Heart right ventricle (tissue), 16 donors: ENCODE measurements at regions of chr4 and their contacts with region 1.

Region 1: GRCh38 chr4:69697536-69698242 is 44.6 kb upstream of the UGT2A1 start:
- DNase-seq: no peak
- ATAC-seq: no peak
- H3K4me3 ChIP-seq: no peak overlapping the region
- H3K27ac ChIP-seq: no peak overlapping the region
- H3K4me1 ChIP-seq: no peaks in the 10 kb centered on the region
- H3K27me3 ChIP-seq: no peaks in the 10 kb centered on the region
- CTCF ChIP-seq: no peak

Region 2: GRCh38 chr4:69881173-69881773 is 183.6 kb after region 1 on chr4:
- intact Hi-C with region 1: loop called in 5 of 10 experiments (anchors 5 to 10 kb)
- DNase-seq: peak in 1 of 2 donors; percentile 3
- ATAC-seq: peak in 3 of 8 donors; percentile 49 to 70 (median 59)
- H3K4me3 ChIP-seq: no peak overlapping the region
- H3K27ac ChIP-seq: no peak overlapping the region
- H3K4me1 ChIP-seq: no peaks in the 10 kb centered on the region
- H3K27me3 ChIP-seq: no peaks in the 10 kb centered on the region
- CTCF ChIP-seq: peak in 8 of 9 donors; percentile 14 to 72 (median 58)

Region 3: DNA sequence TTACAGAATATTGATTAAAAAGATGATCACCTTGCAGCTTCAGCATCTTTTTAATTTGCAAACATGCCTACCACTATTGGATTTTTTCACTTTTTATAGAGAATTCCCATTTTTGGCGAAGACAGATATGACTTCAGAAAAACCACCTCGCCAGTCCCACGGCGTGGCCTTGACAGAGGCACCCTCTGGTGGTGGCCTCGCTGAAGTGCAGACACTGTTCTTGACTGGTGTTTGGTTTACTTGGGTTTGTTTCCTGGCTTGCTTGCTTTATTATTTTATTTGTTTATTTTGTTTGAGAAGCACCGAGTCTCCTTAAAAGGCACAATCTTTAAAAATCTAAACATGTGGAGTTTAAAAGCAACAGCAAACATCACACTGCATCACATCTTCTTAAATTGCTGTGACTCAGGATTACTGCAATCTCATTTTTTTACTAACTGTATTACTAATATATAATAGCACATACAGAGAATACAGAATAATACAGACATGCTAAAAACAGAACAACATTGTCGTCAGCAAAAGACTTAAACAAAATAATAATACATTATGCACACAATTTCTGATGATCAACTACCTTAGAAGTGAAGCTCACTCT is 807.6 kb after region 1 on chr4:
- intact Hi-C with region 1: loop called in 1 of 10 experiments (anchors 10 kb)
- DNase-seq: peak; percentile 5 to 25
- ATAC-seq: no peak
- H3K4me3 ChIP-seq: no peak overlapping the region
- H3K27ac ChIP-seq: no peak overlapping the region
- H3K4me1 ChIP-seq: no peaks in the 10 kb centered on the region
- H3K27me3 ChIP-seq: peaks cover 0 to 20% (median 0%) of the 10 kb centered on the region in 7 donors
- CTCF ChIP-seq: peak; percentile 33 to 94 (median 73)